Activated CD4-positive, alpha-beta memory T cell treated with anti-CD3 and anti-CD28 coated beads, Interleukin-2, amount 10 ng/mL, durations not matched to agents 7 days and 5 days (primary cell): ENCODE measurements at regions of chr11 and their contacts with region 1.

Region 1: DNA sequence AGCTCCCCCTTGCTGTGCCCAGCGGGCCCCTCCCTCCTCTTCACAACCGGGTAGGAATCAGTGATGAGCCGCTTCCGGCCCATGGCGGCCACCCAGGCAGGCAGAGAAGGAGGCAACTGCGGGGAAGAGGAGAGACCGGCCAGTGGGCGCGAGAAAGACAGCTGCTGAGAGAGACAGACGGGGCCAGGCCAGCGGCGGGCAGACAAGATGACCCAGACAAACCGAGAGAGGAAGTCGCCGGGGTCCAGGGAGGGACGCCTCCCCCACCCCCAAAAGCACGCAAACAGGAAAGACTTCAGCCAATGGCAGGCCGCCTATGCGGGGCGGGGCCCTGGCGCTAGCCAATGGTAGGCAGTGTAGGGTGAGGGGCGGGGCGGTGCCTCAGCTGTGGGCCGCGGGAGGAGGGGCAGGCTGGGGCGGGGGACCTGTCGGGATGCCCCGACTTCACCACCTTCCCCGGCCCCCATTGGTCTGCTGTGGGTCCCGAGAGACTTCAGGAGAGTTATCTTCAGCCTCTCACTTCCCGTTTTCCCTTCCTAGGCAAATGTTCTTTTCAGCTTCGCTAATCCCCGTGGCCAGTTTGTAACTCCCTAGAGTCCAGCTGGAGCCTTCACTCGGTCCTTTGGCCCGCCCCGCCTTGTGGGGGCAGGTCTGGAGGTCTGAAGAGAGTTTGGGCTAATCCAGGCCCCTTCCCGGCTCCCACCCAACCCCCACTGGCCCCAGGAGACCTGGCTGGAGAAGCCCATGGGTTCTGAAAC is at the start of gene POLD4:
- DNase-seq: peak; percentile 97
- H3K4me3 Mint-ChIP-seq: peak within 1 kb of the TSS; percentile 94
- H3K27ac Mint-ChIP-seq: peak within 1 kb of the TSS; percentile 99
- H3K4me1 Mint-ChIP-seq: peaks cover 50% of the 10 kb centered on the region
- H3K27me3 Mint-ChIP-seq: peaks cover 5% of the 10 kb centered on the region
- total RNA-seq, gene POLD4: 74.0 to 74.1 TPM

Region 2: GRCh38 chr11:67265633-67266423 is 87.7 kb before region 1 on chr11:
- CTCF ChIA-PET with region 1: interaction called, 20 read pairs
- POLR2A ChIA-PET with region 1: interaction called, 12 read pairs
- DNase-seq: peak; percentile 81
- H3K4me3 Mint-ChIP-seq: peak overlapping the region; percentile 76
- H3K27ac Mint-ChIP-seq: peak overlapping the region; percentile 80
- H3K4me1 Mint-ChIP-seq: peaks cover 67% of the 10 kb centered on the region
- H3K27me3 Mint-ChIP-seq: no peaks in the 10 kb centered on the region

Region 3: GRCh38 chr11:67366546-67366945 is 13.1 kb after region 1 on chr11:
- CTCF ChIA-PET with region 1: interaction called, 847 read pairs
- POLR2A ChIA-PET with region 1: interaction called, 85 read pairs
- DNase-seq: no peak
- H3K4me3 Mint-ChIP-seq: no peak overlapping the region
- H3K27ac Mint-ChIP-seq: no peak overlapping the region
- H3K4me1 Mint-ChIP-seq: peaks cover 52% of the 10 kb centered on the region
- H3K27me3 Mint-ChIP-seq: peaks cover 68% of the 10 kb centered on the region

Region 4: DNA sequence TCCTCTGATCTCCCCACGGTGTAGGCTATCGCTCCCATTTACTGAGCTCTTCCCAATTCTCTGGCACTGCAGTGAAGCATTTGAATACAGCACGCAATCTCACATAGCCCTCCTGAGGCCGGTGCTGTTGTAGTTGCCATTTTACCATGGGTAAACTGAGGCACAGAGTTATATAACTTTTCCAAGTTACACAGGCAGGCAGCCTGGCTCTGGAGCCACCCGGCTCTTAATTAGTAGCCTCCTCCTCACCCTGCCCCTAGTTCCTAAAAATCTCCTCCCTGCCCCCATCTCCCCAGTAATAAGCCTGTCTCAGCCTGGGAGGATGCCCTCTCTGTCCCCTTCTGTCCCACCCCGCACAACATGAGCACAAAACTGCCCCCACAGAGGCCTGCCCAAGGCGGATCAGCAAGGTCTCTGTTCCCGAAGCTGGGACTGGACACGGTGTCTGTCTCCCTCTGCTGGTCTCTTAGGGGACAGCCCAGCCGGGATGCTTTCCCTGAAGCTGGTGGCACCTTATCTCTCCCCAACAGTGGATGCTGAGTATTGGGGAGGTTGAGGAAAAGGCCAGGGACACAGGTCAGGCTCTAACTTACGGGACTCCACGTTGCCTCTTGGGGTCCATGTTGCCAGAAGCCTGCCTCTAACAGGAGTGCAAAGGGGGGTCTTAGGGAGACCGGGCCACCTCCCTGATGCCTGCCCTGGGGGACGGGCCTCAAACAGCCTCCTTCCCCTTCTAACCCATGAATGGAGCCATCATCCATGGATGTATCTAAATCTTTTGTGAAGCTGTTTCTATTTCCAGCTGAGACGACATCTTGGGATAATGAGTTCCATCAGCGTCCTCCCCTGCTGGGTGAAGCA is 29.0 kb after region 1 on chr11:
- CTCF ChIA-PET with region 1: interaction called, 847 read pairs
- POLR2A ChIA-PET with region 1: interaction called, 122 read pairs
- DNase-seq: peak; percentile 87
- H3K4me3 Mint-ChIP-seq: no peak overlapping the region
- H3K27ac Mint-ChIP-seq: no peak overlapping the region
- H3K4me1 Mint-ChIP-seq: peaks cover 4% of the 10 kb centered on the region
- H3K27me3 Mint-ChIP-seq: peaks cover 35% of the 10 kb centered on the region

Region 5: GRCh38 chr11:67401495-67402191 is 48.1 kb after region 1 on chr11 and contains the start of gene PPP1CA:
- CTCF ChIA-PET with region 1: interaction called, 16 read pairs
- POLR2A ChIA-PET with region 1: interaction called, 84 read pairs
- DNase-seq: peak; percentile 93
- H3K4me3 Mint-ChIP-seq: peak within 1 kb of the TSS; percentile 87
- H3K27ac Mint-ChIP-seq: peak within 1 kb of the TSS; percentile 99
- H3K4me1 Mint-ChIP-seq: peaks cover 68% of the 10 kb centered on the region
- H3K27me3 Mint-ChIP-seq: no peaks in the 10 kb centered on the region
- total RNA-seq, gene PPP1CA: 308 to 315 TPM

Region 6: GRCh38 chr11:67468835-67469811 is 115.6 kb after region 1 on chr11 and contains the start of gene TMEM134:
- CTCF ChIA-PET with region 1: no interaction called
- POLR2A ChIA-PET with region 1: interaction called, 11 read pairs
- DNase-seq: peak; percentile 93
- H3K4me3 Mint-ChIP-seq: peak within 1 kb of the TSS; percentile 86
- H3K27ac Mint-ChIP-seq: peak within 1 kb of the TSS; percentile 75
- H3K4me1 Mint-ChIP-seq: peaks cover 40% of the 10 kb centered on the region
- H3K27me3 Mint-ChIP-seq: no peaks in the 10 kb centered on the region
- total RNA-seq, gene TMEM134: 36.3 to 37.6 TPM